ENCODE measurements at regions of chr5 and their contacts with region 1.

Region 1: GRCh38 chr5:76771705-76772405 is 47.0 kb upstream of the F2RL1 start:
- DNase-seq: no peak
- ATAC-seq: no peak
- H3K4me3 Mint-ChIP-seq: no peak overlapping the region
- H3K27ac Mint-ChIP-seq: no peak overlapping the region
- H3K4me1 Mint-ChIP-seq: peaks cover 6% of the 10 kb centered on the region
- H3K27me3 Mint-ChIP-seq: no peaks in the 10 kb centered on the region

Region 2: DNA sequence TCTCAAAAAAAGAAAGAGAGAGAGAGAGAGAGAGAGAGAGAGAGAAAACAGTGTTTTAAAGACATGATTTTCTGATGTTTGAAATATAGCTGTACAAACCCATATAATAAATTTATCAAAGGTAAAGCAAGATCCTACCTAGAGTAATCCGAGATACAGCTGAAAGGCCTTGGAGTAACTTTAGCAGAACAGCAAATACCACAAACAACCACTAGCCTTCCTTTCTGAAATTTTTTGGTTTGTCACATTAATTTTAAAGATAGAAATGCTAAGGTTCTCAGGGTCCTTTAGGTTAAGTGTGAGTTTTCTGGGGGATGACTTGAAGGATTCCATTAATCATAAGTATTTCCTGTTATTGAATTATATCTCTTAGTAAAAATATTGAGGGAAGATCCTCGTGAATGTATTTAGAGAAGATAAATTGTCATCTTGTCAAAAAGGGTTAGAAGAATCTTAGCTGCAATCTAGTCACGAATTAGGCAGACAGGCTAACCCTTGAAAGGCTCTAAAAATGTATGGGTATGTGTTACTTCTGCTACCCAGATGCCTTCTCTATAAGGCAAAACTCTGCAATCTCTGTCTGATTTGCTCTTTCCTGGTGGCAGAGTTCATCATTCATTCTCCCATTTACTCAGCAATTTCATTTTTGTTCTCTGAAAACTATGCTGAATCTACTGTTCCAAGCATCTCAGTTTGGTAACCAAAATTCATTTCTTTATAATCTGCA is 175.9 kb before region 1 on chr5:
- CTCF ChIA-PET with region 1: interaction called, 124 read pairs
- DNase-seq: no peak
- ATAC-seq: no peak
- H3K4me3 Mint-ChIP-seq: no peak overlapping the region
- H3K27ac Mint-ChIP-seq: peak overlapping the region; percentile 64
- H3K4me1 Mint-ChIP-seq: peaks cover 16% of the 10 kb centered on the region
- H3K27me3 Mint-ChIP-seq: no peaks in the 10 kb centered on the region

Region 3: GRCh38 chr5:76641514-76642120 is 130.2 kb before region 1 on chr5:
- CTCF ChIA-PET with region 1: interaction called, 13 read pairs
- DNase-seq: peak; percentile 77
- ATAC-seq: peak; percentile 36
- H3K4me3 Mint-ChIP-seq: no peak overlapping the region
- H3K27ac Mint-ChIP-seq: no peak overlapping the region
- H3K4me1 Mint-ChIP-seq: peaks cover 23% of the 10 kb centered on the region
- H3K27me3 Mint-ChIP-seq: no peaks in the 10 kb centered on the region

Region 4: GRCh38 chr5:76715736-76716455 is 56.0 kb before region 1 on chr5 and contains the start of gene F2R:
- CTCF ChIA-PET with region 1: interaction called, 59 read pairs
- DNase-seq: peak; percentile 77
- ATAC-seq: peak; percentile 82
- H3K4me3 Mint-ChIP-seq: peak within 1 kb of the TSS; percentile 89
- H3K27ac Mint-ChIP-seq: peak within 1 kb of the TSS; percentile 90
- H3K4me1 Mint-ChIP-seq: peaks cover 60% of the 10 kb centered on the region
- H3K27me3 Mint-ChIP-seq: peaks cover 2% of the 10 kb centered on the region
- total RNA-seq, gene F2R: 39.7 to 44.7 TPM

Region 5: GRCh38 chr5:76733049-76733417 is 38.8 kb before region 1 on chr5:
- CTCF ChIA-PET with region 1: interaction called, 67 read pairs
- DNase-seq: peak; percentile 94
- ATAC-seq: peak; percentile 86
- H3K4me3 Mint-ChIP-seq: peak overlapping the region; percentile 65
- H3K27ac Mint-ChIP-seq: peak overlapping the region; percentile 95
- H3K4me1 Mint-ChIP-seq: peaks cover 68% of the 10 kb centered on the region
- H3K27me3 Mint-ChIP-seq: no peaks in the 10 kb centered on the region

Region 6: GRCh38 chr5:76790632-76791290 is 18.9 kb after region 1 on chr5:
- CTCF ChIA-PET with region 1: interaction called, 15 read pairs
- DNase-seq: peak; percentile 41
- ATAC-seq: peak; percentile 75
- H3K4me3 Mint-ChIP-seq: no peak overlapping the region
- H3K27ac Mint-ChIP-seq: peak overlapping the region; percentile 63
- H3K4me1 Mint-ChIP-seq: peaks cover 15% of the 10 kb centered on the region
- H3K27me3 Mint-ChIP-seq: no peaks in the 10 kb centered on the region